ENCODE measurements at regions of chr17 and their contacts with region 1.

Region 1: DNA sequence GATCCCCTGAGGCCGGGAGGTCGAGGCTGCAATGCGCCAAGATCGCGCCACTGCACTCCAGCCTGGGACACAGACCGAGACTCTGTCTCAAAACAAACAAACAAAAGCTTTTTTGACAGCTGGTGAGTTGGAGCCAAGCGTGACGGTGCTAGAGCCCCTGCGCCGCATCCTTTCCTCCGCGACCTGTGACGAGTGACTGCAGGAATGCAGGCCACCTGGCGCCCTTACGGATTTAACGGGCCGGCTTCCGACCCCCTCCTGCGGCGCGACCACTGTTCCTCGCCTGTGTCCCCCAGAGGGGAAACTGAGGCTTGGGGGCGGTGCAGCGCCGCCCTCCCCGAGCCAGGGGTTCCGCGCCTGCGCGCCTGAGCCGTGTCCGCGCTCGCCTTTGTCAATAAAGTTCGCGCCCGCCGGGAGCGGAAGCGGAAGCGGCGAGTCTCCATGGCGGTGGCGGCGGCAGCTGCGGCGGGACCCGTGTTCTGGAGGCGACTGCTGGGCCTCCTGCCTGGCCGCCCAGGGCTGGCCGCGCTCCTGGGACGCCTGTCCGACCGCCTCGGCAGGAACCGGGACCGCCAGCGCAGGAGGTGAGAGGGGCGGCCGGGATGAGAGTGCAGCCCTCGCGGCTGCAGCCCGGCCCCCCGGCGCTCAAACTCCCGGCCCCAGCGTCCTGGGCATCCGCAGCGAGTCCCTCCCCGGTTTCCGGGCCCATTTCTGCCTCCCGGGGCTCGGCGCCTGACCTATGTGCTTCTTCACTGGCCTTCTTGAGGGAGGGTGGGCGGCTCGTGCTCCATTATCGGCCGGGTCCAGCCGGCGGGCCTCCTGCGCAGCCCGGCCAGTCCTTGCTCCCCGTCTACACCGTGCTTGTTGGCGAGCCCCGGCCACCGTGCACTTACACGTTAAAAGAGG is at the start of gene PGS1:
- DNase-seq: peak; percentile 86
- CTCF ChIP-seq: no peak

Region 2: DNA sequence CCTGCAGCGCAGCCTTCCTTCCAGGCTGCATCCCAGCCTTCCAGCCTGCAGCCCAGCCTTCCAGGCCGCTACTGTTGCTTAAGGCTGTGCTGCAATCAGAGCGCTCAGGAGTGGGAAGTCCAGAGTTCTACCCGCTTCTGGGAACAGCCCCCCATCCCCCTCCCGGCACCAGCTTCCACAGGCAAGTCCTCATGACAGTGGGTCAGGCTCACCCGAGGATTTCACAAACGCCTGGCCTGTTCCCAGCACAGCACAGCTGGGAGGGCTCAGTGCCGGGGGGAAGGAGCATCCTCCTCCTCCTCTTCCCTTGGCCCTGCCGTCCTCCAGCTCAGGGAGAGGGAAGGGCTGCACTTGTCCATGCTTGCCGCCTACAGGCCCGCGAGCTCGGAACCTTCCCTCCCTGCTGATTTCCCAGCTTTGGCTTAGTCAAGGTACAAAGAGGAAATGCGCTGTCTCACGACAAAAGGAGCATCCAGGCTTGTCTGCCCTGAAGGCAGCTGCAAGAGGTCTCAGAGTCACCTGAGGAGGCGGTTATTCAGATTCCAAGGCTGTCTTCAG is 26.9 kb before region 1 on chr17:
- CTCF ChIA-PET with region 1: no interaction called
- POLR2A ChIA-PET with region 1: no interaction called
- DNase-seq: no peak
- CTCF ChIP-seq: no peak

Region 3: DNA sequence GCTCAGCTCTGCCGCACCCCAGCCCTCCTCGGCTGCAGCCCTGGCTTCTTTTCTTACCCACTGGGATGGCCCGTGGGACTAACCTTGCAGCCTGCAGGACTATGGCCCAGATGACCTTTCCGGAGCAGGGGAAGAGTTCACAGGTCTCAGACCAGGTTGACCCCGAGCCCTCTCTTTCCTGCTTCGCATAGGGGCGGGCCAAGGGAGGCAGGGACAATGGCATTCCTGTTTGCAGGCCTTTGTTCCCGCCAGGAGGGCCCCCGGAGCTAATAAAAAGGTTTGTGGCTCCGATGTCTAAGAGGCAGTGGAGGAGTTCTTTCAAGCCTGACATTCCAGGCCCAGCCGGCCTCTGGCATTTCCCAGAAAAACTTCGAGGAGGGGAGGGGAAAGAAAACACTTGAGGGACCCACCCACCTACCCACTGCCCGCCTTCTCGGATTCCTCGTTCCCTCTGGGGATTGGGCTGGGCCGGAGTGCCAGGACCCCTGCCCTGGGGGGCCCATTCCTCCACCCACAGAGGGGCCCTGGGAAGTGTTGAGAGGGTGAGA is 12.8 kb before region 1 on chr17:
- CTCF ChIA-PET with region 1: interaction called, 47 read pairs
- POLR2A ChIA-PET with region 1: no interaction called
- DNase-seq: no peak
- CTCF ChIP-seq: no peak